CD8-positive, alpha-beta T cell (primary cell): ENCODE measurements at regions of chr1 and their contacts with region 1.

Region 1: DNA sequence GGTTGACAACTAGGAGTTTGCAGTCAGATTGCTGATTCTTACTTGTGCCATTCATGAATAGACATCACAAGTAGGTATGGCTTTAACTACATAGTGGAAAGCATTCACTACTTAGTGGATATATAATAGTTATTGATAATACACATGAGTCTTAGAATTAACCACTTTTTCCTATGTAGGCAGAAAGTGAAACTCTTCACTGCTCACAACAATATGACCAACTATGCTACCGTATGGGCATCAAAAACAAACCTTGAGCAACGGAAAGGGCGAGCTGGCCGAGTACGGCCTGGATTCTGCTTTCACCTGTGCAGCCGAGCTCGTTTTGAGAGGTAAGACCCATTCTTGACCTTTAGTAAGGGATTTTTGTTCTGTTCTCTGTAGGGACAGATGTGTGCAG is 38.7 kb downstream of the DHX9 start:
- DNase-seq: no peak
- ATAC-seq: no peak
- H3K4me3 ChIP-seq: no peak overlapping the region
- H3K4me3 Mint-ChIP-seq: no peak overlapping the region
- H3K27ac ChIP-seq: no peak overlapping the region
- H3K27ac Mint-ChIP-seq: no peak overlapping the region
- H3K4me1 ChIP-seq: no peaks in the 10 kb centered on the region
- H3K4me1 Mint-ChIP-seq: peaks cover 4% of the 10 kb centered on the region
- H3K27me3 ChIP-seq: no peaks in the 10 kb centered on the region
- H3K27me3 Mint-ChIP-seq: no peaks in the 10 kb centered on the region
- CTCF ChIP-seq: no peak

Region 2: GRCh38 chr1:183622884-183623785 is 745.3 kb after region 1 on chr1:
- CTCF ChIA-PET with region 1: no interaction called
- POLR2A ChIA-PET with region 1: no interaction called
- intact Hi-C with region 1: loop called (anchors 5 to 10 kb)
- DNase-seq: peak in 8 of 9 experiments; percentile 13 to 72 (median 52)
- ATAC-seq: peak; percentile 99
- H3K4me3 ChIP-seq: no peak overlapping the region
- H3K4me3 Mint-ChIP-seq: no peak overlapping the region
- H3K27ac ChIP-seq: no peak overlapping the region
- H3K27ac Mint-ChIP-seq: peak overlapping the region; percentile 89
- H3K4me1 ChIP-seq: peaks cover 6% of the 10 kb centered on the region
- H3K4me1 Mint-ChIP-seq: peaks cover 38% of the 10 kb centered on the region
- H3K27me3 ChIP-seq: no peaks in the 10 kb centered on the region
- H3K27me3 Mint-ChIP-seq: no peaks in the 10 kb centered on the region
- CTCF ChIP-seq: peak; percentile 51

Region 3: GRCh38 chr1:183628537-183628936 is 750.7 kb after region 1 on chr1:
- CTCF ChIA-PET with region 1: no interaction called
- POLR2A ChIA-PET with region 1: no interaction called
- intact Hi-C with region 1: loop called (anchors 5 to 10 kb)
- DNase-seq: no peak
- ATAC-seq: no peak
- H3K4me3 ChIP-seq: no peak overlapping the region
- H3K4me3 Mint-ChIP-seq: no peak overlapping the region
- H3K27ac ChIP-seq: no peak overlapping the region
- H3K27ac Mint-ChIP-seq: peak overlapping the region; percentile 30
- H3K4me1 ChIP-seq: peaks cover 45% of the 10 kb centered on the region
- H3K4me1 Mint-ChIP-seq: peaks cover 59% of the 10 kb centered on the region
- H3K27me3 ChIP-seq: no peaks in the 10 kb centered on the region
- H3K27me3 Mint-ChIP-seq: no peaks in the 10 kb centered on the region
- CTCF ChIP-seq: no peak